ENCODE measurements at regions of chr9 and their contacts with region 1.

Region 1: DNA sequence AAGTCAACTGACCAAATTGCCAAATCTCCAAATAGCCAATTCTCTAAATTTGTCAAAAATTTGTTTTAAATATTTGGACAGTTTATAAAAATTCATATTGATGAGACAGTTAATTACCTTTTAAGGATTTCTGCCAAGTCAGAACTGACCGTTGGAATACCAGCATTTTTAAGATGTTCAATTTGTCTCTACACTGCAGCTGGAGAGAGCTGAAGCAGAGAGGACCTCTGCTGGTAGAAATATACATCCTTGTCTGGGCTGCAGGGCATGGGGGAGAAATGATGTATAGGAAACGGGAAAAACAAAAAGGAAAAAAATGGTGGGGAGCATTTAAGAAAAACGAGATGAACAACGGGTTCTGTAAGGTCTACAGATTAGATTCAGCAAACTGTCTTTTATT is 16.8 kb downstream of the NR6A1 start:
- DNase-seq: no peak
- H3K4me3 Mint-ChIP-seq: no peak overlapping the region
- H3K27ac Mint-ChIP-seq: no peak overlapping the region
- H3K4me1 Mint-ChIP-seq: peaks cover 34% of the 10 kb centered on the region
- H3K27me3 Mint-ChIP-seq: no peaks in the 10 kb centered on the region
- CTCF ChIP-seq: no peak

Region 2: DNA sequence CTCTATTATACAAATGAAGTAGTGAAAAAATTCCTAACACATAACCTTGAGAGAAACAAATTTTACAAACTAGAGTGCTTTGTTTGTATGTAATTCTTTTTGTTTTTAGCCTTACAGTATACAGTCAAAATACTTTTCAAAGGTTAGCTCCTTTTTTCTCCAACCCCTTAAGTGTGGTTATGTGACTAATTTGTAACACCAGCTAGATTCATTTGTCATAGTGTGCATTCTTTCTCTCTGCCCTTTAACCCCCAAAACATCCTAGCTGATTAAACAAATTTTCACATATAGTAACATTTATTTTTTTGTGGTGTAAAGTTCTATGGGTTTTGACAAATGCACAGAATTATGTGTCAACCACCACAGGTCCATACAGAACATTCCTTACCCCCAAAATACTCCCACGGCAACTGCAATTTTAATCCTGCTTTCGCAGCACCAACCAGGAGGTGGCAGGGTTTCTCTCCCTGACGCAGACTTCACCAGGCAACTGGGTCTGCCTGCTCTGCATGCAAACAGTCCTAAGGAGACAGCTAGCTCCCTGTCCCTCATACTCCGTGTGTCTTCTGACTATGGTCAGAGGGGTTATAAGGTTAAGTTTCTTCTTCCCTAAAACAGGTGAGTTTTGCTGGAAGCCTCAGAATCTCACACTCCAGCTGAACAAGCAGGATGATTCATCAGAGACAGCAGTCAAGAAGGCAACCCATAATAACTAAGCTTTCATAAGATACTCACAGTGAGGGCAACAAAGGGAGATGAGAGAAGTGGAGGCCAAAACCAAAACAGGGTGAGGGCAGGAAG is 202.6 kb before region 1 on chr9:
- CTCF ChIA-PET with region 1: no interaction called
- intact Hi-C with region 1: loop called (anchors 5 kb)
- DNase-seq: peak; percentile 48
- H3K4me3 Mint-ChIP-seq: no peak overlapping the region
- H3K27ac Mint-ChIP-seq: no peak overlapping the region
- H3K4me1 Mint-ChIP-seq: no peaks in the 10 kb centered on the region
- H3K27me3 Mint-ChIP-seq: no peaks in the 10 kb centered on the region
- CTCF ChIP-seq: peak; percentile 50

Measured in Calu3 (cell line).